ENCODE measurements at regions of chr1 and their contacts with region 1.

Region 1: DNA sequence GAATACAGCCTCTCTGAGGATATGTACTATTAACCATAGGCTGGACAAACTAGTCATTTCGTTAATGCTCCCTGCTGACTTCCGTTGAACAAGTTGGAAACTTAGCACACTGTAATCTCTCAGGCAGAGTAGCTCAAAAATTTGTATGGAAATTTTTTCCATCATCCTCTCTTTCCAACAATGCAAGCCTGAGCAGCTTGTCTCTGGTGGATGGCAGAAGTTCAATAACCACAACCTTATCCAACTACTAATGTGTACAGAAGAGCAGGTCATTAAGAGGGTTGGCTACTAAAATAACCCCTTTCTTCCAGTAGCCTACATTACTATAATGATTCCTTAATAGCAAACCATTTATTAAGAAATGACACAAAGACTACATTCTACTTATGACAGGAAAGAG is 262.3 kb downstream of the NFIA start:
- DNase-seq: no peak
- ATAC-seq: no peak
- H3K4me3 Mint-ChIP-seq: no peak overlapping the region
- H3K27ac Mint-ChIP-seq: no peak overlapping the region
- H3K4me1 Mint-ChIP-seq: peaks cover 17% of the 10 kb centered on the region
- H3K27me3 Mint-ChIP-seq: no peaks in the 10 kb centered on the region
- CTCF ChIP-seq: no peak

Region 2: DNA sequence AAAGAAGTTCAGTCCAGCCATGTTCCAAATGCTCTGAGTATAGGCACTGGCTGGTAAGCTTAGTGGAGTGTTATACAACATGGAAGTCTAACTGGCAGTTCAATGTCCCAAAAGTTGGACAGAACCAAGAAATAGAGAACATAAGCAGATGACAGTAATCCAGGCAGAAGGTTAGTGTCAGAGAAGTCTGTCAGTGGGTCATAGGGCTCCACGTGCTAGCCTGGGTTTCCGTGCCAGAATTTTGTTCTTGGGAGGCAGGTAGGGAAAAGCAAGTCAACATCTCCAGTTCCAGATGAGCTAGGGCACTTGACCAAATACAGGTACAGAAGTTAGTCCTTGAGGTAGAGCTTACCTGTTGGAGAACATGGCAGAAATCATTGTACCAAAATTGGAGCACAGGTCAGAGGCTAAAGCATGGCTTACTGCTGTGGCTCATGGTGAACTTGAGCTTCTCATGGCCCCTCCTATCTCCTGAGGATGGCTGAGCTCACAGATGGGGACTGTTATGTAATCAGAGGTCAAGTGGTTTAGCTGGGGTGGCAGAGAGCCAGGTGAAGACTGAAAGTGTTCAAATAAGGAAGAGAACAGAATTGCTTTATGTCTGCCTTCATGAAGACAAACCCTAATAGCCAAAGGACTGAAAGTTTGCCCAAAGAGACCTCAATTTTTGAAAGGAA is 91.5 kb before region 1 on chr1:
- CTCF ChIA-PET with region 1: no interaction called
- POLR2A ChIA-PET with region 1: interaction called, 10 read pairs
- DNase-seq: no peak
- ATAC-seq: peak; percentile 61; the same call in 1 of the 2 replicates
- H3K4me3 Mint-ChIP-seq: no peak overlapping the region
- H3K27ac Mint-ChIP-seq: no peak overlapping the region
- H3K4me1 Mint-ChIP-seq: peaks cover 54% of the 10 kb centered on the region
- H3K27me3 Mint-ChIP-seq: no peaks in the 10 kb centered on the region
- CTCF ChIP-seq: no peak

Region 3: DNA sequence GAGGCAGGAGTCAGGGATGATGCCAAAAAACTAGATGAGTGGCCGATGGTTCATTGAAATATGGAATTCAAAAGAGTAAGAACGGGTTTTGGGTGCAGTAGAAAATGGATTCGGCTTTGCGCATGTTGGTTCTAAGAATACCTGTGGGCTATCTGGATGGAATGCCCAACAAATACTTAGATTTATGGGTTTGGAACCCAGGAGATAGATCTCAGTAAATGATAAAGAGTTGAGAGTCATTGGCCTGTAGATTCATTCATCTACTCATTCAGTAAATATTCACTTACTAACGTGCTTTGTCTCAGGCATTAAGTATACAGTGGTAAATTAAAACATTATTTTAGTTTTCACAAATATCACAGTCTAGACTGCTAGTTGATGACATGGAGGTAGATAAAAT is 14.7 kb before region 1 on chr1:
- CTCF ChIA-PET with region 1: no interaction called
- POLR2A ChIA-PET with region 1: no interaction called
- DNase-seq: no peak
- ATAC-seq: no peak
- H3K4me3 Mint-ChIP-seq: no peak overlapping the region
- H3K27ac Mint-ChIP-seq: no peak overlapping the region
- H3K4me1 Mint-ChIP-seq: peaks cover 4% of the 10 kb centered on the region
- H3K27me3 Mint-ChIP-seq: no peaks in the 10 kb centered on the region
- CTCF ChIP-seq: no peak

Measured in WTC11 (cell line).